ENCODE measurements at regions of chr20 and their contacts with region 1.

Region 1: GRCh38 chr20:46648903-46649649 is 2.2 kb downstream of the SLC13A3 start:
- DNase-seq: no peak

Region 2: GRCh38 chr20:45061244-45061643 is 1587.8 kb before region 1 on chr20:
- intact Hi-C with region 1: no loop called
- DNase-seq: no peak

Region 3: DNA sequence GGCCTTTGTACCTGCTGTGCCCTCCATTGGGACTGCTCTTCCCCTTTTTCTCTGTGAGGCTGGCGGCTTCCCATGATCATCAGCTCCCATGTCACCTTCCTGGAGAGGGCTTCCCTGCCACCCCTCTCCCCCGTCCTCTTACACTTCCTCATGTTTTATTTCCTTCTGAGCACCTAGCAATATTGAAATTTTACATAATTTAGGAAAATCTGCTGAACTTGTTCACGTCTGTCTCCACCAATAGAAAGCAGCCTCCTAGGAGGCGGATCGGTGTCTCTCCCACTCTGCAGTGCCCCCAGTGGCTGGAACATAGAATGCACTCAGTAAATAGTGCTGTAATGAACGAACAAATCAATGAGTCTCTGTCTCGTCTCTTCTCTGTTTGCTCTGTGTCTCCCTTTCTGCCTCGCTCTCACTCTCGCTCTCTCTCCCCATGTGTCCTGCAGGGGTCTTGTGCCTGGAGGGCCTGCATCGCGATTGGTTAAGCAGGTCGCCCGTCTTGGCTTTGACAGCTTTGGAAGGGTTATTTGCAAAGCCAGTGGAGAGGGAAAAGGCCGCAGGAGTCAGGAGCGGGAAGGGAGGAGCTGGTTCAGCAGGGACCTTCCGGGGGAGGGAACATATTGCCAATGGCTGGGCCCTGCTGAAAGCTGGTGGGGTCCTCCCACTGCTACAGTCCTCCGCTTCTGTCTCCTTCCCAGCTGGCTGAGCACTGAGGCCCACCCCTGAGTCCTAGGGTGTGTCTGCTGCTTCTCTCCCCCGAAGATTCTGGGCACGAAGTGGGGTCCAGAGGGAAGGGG is 86.5 kb before region 1 on chr20:
- intact Hi-C with region 1: loop called (anchors 10 kb)
- DNase-seq: peak; percentile 45 to 96 (median 79)

Region 4: DNA sequence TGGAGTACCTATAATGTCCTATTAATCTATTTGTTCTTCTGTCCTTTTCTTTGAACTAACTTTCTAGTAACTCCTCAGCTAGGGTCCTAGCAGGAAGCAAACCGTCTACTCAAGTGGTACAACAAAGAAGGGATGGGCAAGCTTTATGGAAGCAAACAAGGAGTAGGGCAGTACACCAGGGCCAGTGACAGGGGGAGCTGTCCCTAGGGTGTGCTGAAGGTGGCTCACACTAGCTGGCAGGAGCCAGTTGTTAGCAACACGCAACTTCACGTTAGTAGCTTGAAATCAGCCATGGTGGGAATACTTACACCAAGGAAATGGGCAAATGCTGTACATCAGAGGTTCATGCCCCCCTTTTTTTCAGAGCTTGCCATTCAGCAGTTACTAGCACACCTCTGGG is 171.6 kb after region 1 on chr20:
- intact Hi-C with region 1: no loop called
- DNase-seq: no peak